Mammary epithelial cell (primary cell): ENCODE measurements at regions of chr18 and their contacts with region 1.

Region 1: DNA sequence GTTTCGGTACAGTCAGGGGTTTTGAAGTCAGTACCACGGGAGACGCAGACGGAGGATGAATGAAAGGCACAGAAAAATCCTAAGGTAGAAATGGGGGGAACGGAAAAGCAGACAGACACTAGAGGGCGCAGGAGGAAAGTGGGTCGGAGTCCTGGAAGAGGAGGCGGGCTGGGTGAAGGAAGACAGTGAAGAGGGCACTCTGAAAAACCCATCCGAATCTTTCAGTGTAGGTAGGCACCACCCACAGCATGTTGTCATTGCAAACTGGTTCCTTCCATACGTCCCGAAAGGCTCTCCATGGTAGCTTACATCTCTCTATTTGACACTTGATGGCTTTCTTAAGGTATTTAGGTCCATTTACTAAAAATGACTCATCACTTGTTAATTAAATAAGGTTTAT is 18.5 kb upstream of the ZNF236 start:
- DNase-seq: peak; percentile 69
- H3K4me3 ChIP-seq: no peak overlapping the region
- H3K27ac ChIP-seq: no peak overlapping the region
- H3K4me1 ChIP-seq: peaks cover 37% of the 10 kb centered on the region
- H3K27me3 ChIP-seq: no peaks in the 10 kb centered on the region
- CTCF ChIP-seq: peak; percentile 78 to 88

Region 2: DNA sequence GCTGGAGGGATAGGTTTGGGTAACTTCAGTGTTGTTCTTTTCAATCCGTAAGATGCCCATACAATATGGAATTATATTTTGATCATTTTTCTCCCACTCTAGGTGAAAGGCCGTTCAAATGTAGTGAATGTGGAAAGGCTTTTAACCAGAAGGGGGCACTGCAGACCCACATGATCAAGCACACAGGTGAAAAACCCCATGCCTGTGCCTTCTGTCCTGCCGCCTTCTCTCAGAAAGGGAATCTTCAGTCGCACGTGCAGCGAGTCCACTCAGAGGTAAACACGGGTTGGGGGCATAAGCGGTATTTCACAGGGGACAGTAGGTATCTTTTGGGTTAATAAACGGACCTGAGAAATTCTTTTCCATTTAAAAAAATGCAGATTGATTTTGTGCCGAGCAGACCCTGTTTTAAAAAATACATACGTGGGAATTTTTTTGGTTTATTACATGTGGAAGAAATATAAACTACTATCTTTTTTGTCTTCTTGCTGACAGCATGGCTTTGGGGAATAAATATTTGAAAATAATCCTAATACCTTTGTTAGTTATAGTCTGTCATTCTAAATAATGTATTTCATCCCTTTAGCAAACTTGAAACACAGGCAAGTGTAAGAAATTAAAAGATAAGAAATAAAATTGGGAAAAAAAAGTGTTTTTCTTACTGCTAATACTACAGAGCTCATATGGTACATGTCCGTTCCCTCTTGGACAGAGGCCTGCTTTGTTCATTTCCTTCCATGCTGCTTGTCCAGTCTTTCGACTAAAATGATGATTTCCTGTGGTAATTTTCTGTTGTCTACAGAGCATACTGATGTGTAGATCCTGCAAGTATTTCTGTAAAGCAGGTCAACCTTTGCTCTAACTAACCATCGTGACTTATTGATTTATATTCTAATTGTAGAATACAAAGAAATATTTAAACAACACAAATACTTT is 71.8 kb after region 1 on chr18:
- CTCF ChIA-PET with region 1: no interaction called
- dilution Hi-C with region 1: no loop called
- in situ Hi-C with region 1: no loop called
- intact Hi-C with region 1: loop called (anchors 1 kb)
- DNase-seq: peak; percentile 20
- H3K4me3 ChIP-seq: no peak overlapping the region
- H3K27ac ChIP-seq: no peak overlapping the region
- H3K4me1 ChIP-seq: no peaks in the 10 kb centered on the region
- H3K27me3 ChIP-seq: no peaks in the 10 kb centered on the region
- CTCF ChIP-seq: peak; percentile 60 to 64

Region 3: GRCh38 chr18:76982841-76983587 is 179.2 kb after region 1 on chr18:
- CTCF ChIA-PET with region 1: no interaction called
- dilution Hi-C with region 1: no loop called
- in situ Hi-C with region 1: loop called (anchors 5 to 10 kb)
- intact Hi-C with region 1: loop called (anchors 1 kb)
- DNase-seq: peak; percentile 87
- H3K4me3 ChIP-seq: no peak overlapping the region
- H3K27ac ChIP-seq: no peak overlapping the region
- H3K4me1 ChIP-seq: peaks cover 4% of the 10 kb centered on the region
- H3K27me3 ChIP-seq: no peaks in the 10 kb centered on the region
- CTCF ChIP-seq: peak; percentile 88 to 94

Region 4: GRCh38 chr18:77054606-77055428 is 251.0 kb after region 1 on chr18:
- CTCF ChIA-PET with region 1: no interaction called
- dilution Hi-C with region 1: no loop called
- in situ Hi-C with region 1: no loop called
- intact Hi-C with region 1: loop called (anchors 5 kb)
- DNase-seq: no peak
- H3K4me3 ChIP-seq: no peak overlapping the region
- H3K27ac ChIP-seq: no peak overlapping the region
- H3K4me1 ChIP-seq: no peaks in the 10 kb centered on the region
- H3K27me3 ChIP-seq: no peaks in the 10 kb centered on the region
- CTCF ChIP-seq: peak; percentile 23 to 54

Region 5: GRCh38 chr18:77207540-77207939 is 403.7 kb after region 1 on chr18:
- CTCF ChIA-PET with region 1: interaction called, 4 read pairs
- dilution Hi-C with region 1: no loop called
- in situ Hi-C with region 1: loop called in 1 of 2 experiments (anchors 25 kb)
- intact Hi-C with region 1: loop called (anchors 5 kb)
- DNase-seq: peak; percentile 42
- H3K4me3 ChIP-seq: no peak overlapping the region
- H3K27ac ChIP-seq: no peak overlapping the region
- H3K4me1 ChIP-seq: no peaks in the 10 kb centered on the region
- H3K27me3 ChIP-seq: no peaks in the 10 kb centered on the region
- CTCF ChIP-seq: peak; percentile 67 to 78